ENCODE measurements at regions of chr6 and their contacts with region 1.

Region 1: DNA sequence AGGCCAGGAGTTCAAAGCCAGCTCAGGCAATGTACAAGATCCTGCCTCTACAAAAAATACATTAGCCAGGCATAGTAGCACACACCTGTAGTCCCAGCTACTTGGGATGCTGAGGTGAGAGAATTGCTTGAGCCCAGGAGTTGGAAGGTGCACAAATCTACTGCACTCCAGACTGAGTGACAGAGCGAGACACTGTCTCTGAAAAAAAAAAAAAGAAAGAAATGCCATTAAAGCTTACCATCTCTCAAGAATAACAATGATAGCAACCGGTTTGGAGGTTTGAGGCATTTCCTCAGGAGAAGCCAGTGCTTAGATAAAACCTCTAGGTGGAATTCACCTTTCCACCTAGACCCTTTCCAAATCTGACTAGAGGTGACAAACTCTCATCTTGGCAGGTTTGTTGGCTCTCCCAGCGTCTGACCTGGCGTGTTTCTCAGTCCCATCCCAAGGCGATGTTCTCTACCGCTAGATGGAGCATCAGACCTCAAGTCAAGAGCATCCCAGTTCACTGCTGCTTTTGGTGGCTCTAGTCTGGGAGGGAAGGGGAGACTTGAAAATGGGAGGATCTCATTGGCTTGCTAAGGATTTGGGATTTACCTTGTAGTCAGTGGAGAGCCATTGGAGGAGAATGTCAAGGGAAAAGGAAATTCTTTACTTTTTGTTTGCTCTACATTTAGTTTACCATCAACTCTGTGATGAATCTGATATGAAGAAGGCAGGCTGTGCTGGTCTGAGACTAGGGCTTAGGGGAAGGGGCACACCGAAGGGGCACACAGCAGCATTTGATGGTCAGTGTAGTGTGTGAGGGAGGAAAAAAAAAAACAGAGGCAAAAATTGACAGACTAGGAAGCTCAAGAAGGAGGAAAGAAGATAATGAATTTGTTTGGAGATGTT is 67.9 kb downstream of the NCOA7 start:
- DNase-seq: peak; percentile 73
- H3K4me3 ChIP-seq: no peak overlapping the region
- H3K27ac ChIP-seq: no peak overlapping the region
- H3K4me1 ChIP-seq: no peaks in the 10 kb centered on the region
- H3K27me3 ChIP-seq: no peaks in the 10 kb centered on the region
- CTCF ChIP-seq: peak; percentile 91 to 92

Region 2: DNA sequence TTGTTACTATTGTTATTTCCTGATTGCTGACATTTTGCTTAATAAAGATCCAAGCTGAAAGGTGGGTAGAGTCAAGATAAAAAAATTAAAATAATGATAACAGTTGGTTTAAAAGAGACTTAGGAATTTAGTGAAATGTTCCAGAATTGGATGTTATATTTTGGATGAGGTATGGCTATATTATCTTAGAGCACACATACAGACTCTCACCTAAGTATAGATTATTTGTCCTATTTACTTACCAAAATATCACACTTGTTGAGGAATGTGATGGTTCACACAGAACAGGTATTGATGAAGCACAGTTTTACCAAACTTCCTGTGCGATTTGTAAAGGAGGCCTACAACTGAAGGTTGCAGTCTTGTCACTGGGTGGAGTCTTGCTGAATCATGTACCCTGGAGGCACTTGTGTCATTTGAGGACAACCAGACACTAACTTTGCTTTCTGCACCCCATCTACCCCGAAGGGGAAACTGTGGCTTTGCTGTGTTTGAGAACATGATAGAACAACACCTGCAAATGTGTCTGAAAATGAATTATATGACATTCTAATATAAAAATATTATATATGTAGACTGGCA is 65.4 kb after region 1 on chr6:
- CTCF ChIA-PET with region 1: no interaction called
- dilution Hi-C with region 1: no loop called
- in situ Hi-C with region 1: no loop called
- intact Hi-C with region 1: loop called (anchors 2 kb)
- DNase-seq: peak; percentile 78
- H3K4me3 ChIP-seq: no peak overlapping the region
- H3K27ac ChIP-seq: peak overlapping the region; percentile 52
- H3K4me1 ChIP-seq: peaks cover 30% of the 10 kb centered on the region
- H3K27me3 ChIP-seq: no peaks in the 10 kb centered on the region
- CTCF ChIP-seq: no peak

Region 3: DNA sequence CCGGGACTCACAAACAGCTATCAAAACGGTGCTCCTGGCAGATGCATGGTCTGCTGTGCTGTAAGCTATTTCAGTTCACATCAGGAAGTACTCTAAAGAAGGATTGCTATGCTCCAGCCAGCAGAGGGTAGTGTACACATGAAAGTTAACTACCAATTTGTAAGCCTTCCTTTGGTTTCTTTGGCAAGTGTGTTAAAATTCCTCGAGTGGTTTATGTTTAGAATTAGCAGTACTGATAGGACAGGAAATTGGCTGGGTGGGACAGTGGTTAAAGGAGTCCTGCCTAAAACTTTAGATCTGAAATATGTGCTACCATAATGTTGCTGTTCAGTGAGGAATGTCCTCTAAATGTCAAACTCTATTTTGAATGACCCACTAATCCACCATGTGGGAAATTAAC is 175.0 kb after region 1 on chr6:
- CTCF ChIA-PET with region 1: no interaction called
- dilution Hi-C with region 1: no loop called
- in situ Hi-C with region 1: no loop called
- intact Hi-C with region 1: no loop called
- DNase-seq: peak; percentile 58
- H3K4me3 ChIP-seq: no peak overlapping the region
- H3K27ac ChIP-seq: no peak overlapping the region
- H3K4me1 ChIP-seq: peaks cover 3% of the 10 kb centered on the region
- H3K27me3 ChIP-seq: no peaks in the 10 kb centered on the region
- CTCF ChIP-seq: peak; percentile 57 to 66

Region 4: DNA sequence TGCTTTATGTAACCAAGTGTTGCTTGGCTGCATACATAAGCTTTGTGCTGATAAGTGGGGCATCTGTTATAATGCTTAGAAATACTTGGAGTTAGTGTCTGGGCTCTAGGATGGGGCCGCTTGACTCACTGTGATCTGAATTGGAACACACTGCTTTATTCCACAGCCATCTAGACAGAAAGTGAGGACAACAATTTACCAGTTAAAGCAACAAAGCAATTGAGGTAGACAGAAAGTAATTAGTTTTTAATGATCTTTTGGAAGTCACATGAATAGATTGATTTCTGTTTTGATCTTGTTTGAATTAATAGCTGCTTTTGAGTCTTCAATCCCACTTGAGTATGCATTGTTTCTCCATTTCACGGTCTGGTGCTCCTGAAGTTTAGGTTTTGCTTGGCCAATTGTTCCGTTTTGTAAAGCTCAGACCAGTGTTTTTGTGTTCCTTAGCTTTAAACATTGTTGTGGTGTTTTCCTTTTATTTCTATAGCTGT is 285.1 kb after region 1 on chr6:
- CTCF ChIA-PET with region 1: no interaction called
- dilution Hi-C with region 1: no loop called
- in situ Hi-C with region 1: no loop called
- intact Hi-C with region 1: no loop called
- DNase-seq: no peak
- H3K4me3 ChIP-seq: no peak overlapping the region
- H3K27ac ChIP-seq: no peak overlapping the region
- H3K4me1 ChIP-seq: no peaks in the 10 kb centered on the region
- H3K27me3 ChIP-seq: no peaks in the 10 kb centered on the region
- CTCF ChIP-seq: no peak

Measured in mammary epithelial cell (primary cell).